ENCODE measurements at regions of chr11 and their contacts with region 1.

Region 1: DNA sequence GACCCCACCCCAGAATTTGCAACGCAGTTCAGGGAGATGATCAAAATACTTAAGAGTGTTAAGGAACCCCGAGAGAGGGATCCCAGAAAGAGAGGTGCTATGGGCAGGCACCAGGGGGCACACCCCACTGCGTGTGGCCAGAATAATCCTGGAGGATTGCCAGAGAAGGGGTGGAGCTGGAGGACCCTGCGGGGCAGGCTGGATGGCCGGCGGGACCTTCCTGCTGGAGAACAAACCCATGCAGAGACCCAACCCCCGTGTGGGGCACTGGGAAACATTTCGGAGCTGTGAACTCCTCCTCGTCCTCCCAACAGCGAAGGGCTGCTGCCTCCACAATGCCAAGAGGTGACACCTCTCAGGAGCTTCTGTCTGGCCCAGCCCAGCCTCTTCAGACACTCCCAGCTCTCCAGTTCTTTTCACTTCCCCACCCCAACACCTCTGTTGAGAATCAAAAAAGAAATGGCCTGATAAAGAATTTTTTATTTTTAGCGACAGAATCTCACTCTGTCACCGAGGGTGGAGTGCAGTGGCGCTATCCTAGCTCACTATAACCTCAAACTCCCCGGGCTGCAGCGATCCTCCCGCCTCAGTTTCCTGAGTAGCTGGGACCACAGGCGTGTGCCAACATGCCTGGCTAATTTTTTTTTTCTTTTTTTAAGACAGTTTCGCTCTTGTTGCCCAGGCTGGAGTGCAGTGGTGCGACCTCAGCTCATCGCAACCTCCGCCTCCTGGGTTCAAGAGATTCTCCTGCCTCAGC is 25.6 kb downstream of the RHOD start:
- DNase-seq: no peak
- ATAC-seq: peak in 1 of 2 donors; percentile 6
- H3K4me3 ChIP-seq: no peak overlapping the region
- H3K27ac ChIP-seq: no peak overlapping the region
- H3K4me1 ChIP-seq: no peaks in the 10 kb centered on the region
- H3K27me3 ChIP-seq: no peaks in the 10 kb centered on the region
- CTCF ChIP-seq: no peak
- POLR2A ChIP-seq: no peak

Region 2: GRCh38 chr11:67160874-67161783 is 78.9 kb after region 1 on chr11:
- in situ Hi-C with region 1: loop called in 1 of 4 experiments (anchors 10 kb)
- intact Hi-C with region 1: loop called (anchors 5 kb)
- DNase-seq: no peak
- ATAC-seq: no peak
- H3K4me3 ChIP-seq: no peak overlapping the region
- H3K27ac ChIP-seq: no peak overlapping the region
- H3K4me1 ChIP-seq: peaks cover 12 to 29% of the 10 kb centered on the region in 2 donors
- H3K27me3 ChIP-seq: no peaks in the 10 kb centered on the region
- CTCF ChIP-seq: no peak
- POLR2A ChIP-seq: no peak

Region 3: GRCh38 chr11:68328374-68329091 is 1246.3 kb after region 1 on chr11:
- in situ Hi-C with region 1: no loop called
- intact Hi-C with region 1: no loop called
- DNase-seq: no peak
- ATAC-seq: no peak
- H3K4me3 ChIP-seq: no peak overlapping the region
- H3K27ac ChIP-seq: no peak overlapping the region
- H3K4me1 ChIP-seq: peaks cover 28 to 50% of the 10 kb centered on the region in 2 donors
- H3K27me3 ChIP-seq: no peaks in the 10 kb centered on the region
- CTCF ChIP-seq: no peak
- POLR2A ChIP-seq: no peak

Measured in gastrocnemius medialis (tissue), 4 donors.